ENCODE measurements at regions of chr3 and their contacts with region 1.

Region 1: DNA sequence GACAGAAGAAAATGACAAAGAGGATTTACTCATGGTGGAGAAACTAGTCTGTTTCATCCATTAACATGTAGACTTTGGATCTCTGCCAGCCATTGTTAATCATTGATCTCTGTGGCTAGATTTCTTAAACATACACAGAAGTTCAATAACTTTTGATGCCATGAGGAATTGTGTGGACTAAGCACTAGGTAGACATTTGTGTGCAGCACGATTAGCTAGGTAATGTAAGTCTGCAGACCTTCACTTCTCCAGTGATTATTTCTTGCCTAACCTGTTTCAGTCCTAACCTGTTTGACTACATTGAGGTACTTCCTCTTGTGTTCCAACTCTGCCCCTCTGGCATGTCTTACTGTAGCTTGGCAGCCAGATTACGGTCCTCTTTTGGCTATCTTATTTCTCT is 928.5 kb upstream of the ROBO1 start:
- DNase-seq: peak; percentile 78
- H3K4me3 Mint-ChIP-seq: peak overlapping the region; percentile 28
- H3K27ac Mint-ChIP-seq: peak overlapping the region; percentile 91
- H3K4me1 Mint-ChIP-seq: peaks cover 19% of the 10 kb centered on the region
- H3K27me3 Mint-ChIP-seq: no peaks in the 10 kb centered on the region
- CTCF ChIP-seq: no peak

Region 2: DNA sequence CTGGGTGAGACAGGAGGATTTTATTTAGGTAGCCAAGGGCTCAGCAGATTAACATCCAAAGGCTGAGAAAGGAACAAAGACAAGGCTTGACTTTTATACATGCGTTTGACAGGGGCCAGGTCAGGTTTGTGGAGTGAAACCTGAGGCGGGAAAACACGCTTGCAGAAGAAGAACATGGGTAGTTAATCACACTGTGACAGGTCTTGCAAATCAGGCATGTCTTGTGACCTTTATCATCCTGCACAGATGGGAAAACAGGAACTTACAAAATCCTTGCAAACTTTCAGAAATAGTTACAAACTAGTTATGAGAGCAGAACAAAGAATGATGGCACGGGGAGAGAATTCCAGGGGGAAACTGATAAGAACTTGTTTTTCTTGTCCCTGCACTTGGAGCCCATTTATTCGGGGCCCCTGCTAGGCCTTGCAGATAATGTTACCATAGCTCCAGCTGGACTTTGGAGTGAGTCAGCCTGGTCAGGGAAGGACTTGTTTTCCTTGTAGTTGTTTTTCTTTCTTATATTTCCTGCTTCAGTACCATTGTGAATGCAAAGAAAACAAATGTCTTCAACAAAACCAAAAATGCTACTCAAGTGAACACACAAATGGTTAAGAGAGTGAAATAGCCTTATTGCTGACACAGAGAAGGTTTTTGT is 37.4 kb after region 1 on chr3:
- CTCF ChIA-PET with region 1: no interaction called
- intact Hi-C with region 1: loop called (anchors 1 kb)
- DNase-seq: peak; percentile 68
- H3K4me3 Mint-ChIP-seq: peak overlapping the region; percentile 43
- H3K27ac Mint-ChIP-seq: peak overlapping the region; percentile 83
- H3K4me1 Mint-ChIP-seq: peaks cover 19% of the 10 kb centered on the region
- H3K27me3 Mint-ChIP-seq: no peaks in the 10 kb centered on the region
- CTCF ChIP-seq: no peak